ENCODE measurements at regions of chr10 and their contacts with region 1.

Region 1: GRCh38 chr10:34994565-34995142 is 95.5 kb downstream of the CUL2 start:
- DNase-seq: peak; percentile 56
- H3K4me3 Mint-ChIP-seq: no peak overlapping the region
- H3K27ac Mint-ChIP-seq: no peak overlapping the region
- H3K4me1 Mint-ChIP-seq: peaks cover 10% of the 10 kb centered on the region
- H3K27me3 Mint-ChIP-seq: no peaks in the 10 kb centered on the region

Region 2: GRCh38 chr10:34960983-34961382 is 33.7 kb before region 1 on chr10:
- CTCF ChIA-PET with region 1: no interaction called
- POLR2A ChIA-PET with region 1: no interaction called
- DNase-seq: no peak
- H3K4me3 Mint-ChIP-seq: no peak overlapping the region
- H3K27ac Mint-ChIP-seq: no peak overlapping the region
- H3K4me1 Mint-ChIP-seq: no peaks in the 10 kb centered on the region
- H3K27me3 Mint-ChIP-seq: no peaks in the 10 kb centered on the region

Region 3: GRCh38 chr10:35027567-35027966 is 32.9 kb after region 1 on chr10:
- CTCF ChIA-PET with region 1: interaction called, 39 read pairs
- POLR2A ChIA-PET with region 1: no interaction called
- DNase-seq: no peak
- H3K4me3 Mint-ChIP-seq: no peak overlapping the region
- H3K27ac Mint-ChIP-seq: no peak overlapping the region
- H3K4me1 Mint-ChIP-seq: peaks cover 2% of the 10 kb centered on the region
- H3K27me3 Mint-ChIP-seq: no peaks in the 10 kb centered on the region

Region 4: GRCh38 chr10:35218339-35218955 is 223.8 kb after region 1 on chr10:
- CTCF ChIA-PET with region 1: interaction called, 12 read pairs
- POLR2A ChIA-PET with region 1: no interaction called
- DNase-seq: peak; percentile 88
- H3K4me3 Mint-ChIP-seq: peak overlapping the region; percentile 51
- H3K27ac Mint-ChIP-seq: peak overlapping the region; percentile 76
- H3K4me1 Mint-ChIP-seq: peaks cover 55% of the 10 kb centered on the region
- H3K27me3 Mint-ChIP-seq: no peaks in the 10 kb centered on the region